Calu3 (cell line): ENCODE measurements at regions of chr10 and their contacts with region 1.

Region 1: DNA sequence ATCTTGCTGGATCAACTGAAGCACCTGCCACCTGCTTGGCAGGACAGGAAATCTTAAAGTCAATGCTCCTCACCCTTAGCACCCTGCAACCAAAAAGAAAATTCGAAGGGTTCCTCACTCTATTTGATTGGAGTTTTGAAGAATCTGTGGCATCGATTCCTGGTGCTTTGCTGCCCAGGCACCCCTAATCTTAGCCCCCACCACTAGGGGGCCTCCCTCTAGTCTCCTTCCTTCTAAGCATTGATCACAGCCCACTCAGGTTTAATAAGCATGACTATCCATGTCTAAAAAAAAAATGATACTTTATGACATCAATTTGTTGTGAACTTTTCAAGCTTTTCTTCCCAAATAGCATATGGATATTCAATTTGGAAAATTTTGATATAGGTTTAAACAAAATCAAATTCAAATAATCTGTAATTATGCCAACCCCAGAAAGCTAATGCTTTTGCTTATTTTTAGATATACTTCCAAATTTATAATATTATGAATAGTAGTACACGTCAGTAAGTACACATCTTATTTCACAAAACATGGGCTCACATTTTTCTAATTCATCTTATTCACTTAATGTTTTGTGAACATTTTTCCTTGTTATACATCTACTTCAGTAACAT is 45.3 kb downstream of the NRG3 start:
- DNase-seq: peak; percentile 75
- H3K4me3 Mint-ChIP-seq: no peak overlapping the region
- H3K27ac Mint-ChIP-seq: no peak overlapping the region
- H3K4me1 Mint-ChIP-seq: peaks cover 40% of the 10 kb centered on the region
- H3K27me3 Mint-ChIP-seq: no peaks in the 10 kb centered on the region
- CTCF ChIP-seq: peak; percentile 87

Region 2: DNA sequence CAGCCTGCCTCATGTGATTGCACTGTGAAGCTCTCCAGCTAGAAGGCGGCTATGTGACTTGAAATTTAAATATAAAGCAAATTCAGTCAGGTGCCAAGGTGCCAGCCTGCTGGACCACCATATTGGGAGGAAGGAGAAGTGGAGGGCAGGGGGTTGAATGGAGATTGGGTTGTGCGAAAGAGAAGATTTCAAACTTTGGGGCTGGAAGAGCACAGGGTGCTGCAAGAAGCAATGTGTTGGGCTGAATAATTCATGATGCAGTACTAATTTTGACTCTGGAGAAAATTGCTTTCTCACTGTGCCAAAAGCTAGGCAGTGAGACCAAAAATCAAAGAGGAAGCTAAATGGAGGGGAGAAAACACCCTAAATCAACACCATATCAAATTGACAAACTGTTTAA is 290.0 kb after region 1 on chr10:
- CTCF ChIA-PET with region 1: interaction called, 10 read pairs
- intact Hi-C with region 1: no loop called
- DNase-seq: no peak
- H3K4me3 Mint-ChIP-seq: no peak overlapping the region
- H3K27ac Mint-ChIP-seq: no peak overlapping the region
- H3K4me1 Mint-ChIP-seq: no peaks in the 10 kb centered on the region
- H3K27me3 Mint-ChIP-seq: no peaks in the 10 kb centered on the region
- CTCF ChIP-seq: no peak